H1 (cell line): ENCODE measurements at regions of chr11 and their contacts with region 1.

Region 1: GRCh38 chr11:131748151-131749050 is 378.0 kb downstream of the NTM start:
- DNase-seq: peak in 1 of 2 experiments; percentile 83
- H3K4me3 ChIP-seq: no peak overlapping the region
- H3K27ac ChIP-seq: no peak overlapping the region
- H3K4me1 ChIP-seq: peaks cover 0 to 2% (median 0%) of the 10 kb centered on the region in 4 experiments; a peak in 2 of 7 replicates
- H3K27me3 ChIP-seq: no peaks in the 10 kb centered on the region
- CTCF ChIP-seq: peak; percentile 76 to 89 (median 82)
- EP300 ChIP-seq: no peak
- POLR2A ChIP-seq: no peak
- RAD21 ChIP-seq: peak; percentile 87 to 88

Region 2: GRCh38 chr11:131637469-131638175 is 110.8 kb before region 1 on chr11:
- CTCF ChIA-PET with region 1: no interaction called
- POLR2A ChIA-PET with region 1: no interaction called
- DNase-seq: no peak
- H3K4me3 ChIP-seq: no peak overlapping the region
- H3K27ac ChIP-seq: no peak overlapping the region
- H3K4me1 ChIP-seq: peaks cover 5 to 20% (median 15%) of the 10 kb centered on the region in 4 experiments; a peak in 4 of 7 replicates
- H3K27me3 ChIP-seq: no peaks in the 10 kb centered on the region
- CTCF ChIP-seq: no peak
- EP300 ChIP-seq: no peak
- POLR2A ChIP-seq: no peak
- RAD21 ChIP-seq: no peak

Region 3: GRCh38 chr11:131658952-131659351 is 89.4 kb before region 1 on chr11:
- CTCF ChIA-PET with region 1: no interaction called
- POLR2A ChIA-PET with region 1: no interaction called
- DNase-seq: no peak
- H3K4me3 ChIP-seq: no peak overlapping the region
- H3K27ac ChIP-seq: no peak overlapping the region
- H3K4me1 ChIP-seq: peaks cover 16 to 41% (median 35%) of the 10 kb centered on the region in 4 experiments
- H3K27me3 ChIP-seq: 0 out of 7 replicates have a peak, but pooled peaks cover 0 to 1% (median 0%) of the 10 kb centered on the region in 4 experiments
- CTCF ChIP-seq: no peak
- EP300 ChIP-seq: no peak
- POLR2A ChIP-seq: no peak
- RAD21 ChIP-seq: no peak

Region 4: DNA sequence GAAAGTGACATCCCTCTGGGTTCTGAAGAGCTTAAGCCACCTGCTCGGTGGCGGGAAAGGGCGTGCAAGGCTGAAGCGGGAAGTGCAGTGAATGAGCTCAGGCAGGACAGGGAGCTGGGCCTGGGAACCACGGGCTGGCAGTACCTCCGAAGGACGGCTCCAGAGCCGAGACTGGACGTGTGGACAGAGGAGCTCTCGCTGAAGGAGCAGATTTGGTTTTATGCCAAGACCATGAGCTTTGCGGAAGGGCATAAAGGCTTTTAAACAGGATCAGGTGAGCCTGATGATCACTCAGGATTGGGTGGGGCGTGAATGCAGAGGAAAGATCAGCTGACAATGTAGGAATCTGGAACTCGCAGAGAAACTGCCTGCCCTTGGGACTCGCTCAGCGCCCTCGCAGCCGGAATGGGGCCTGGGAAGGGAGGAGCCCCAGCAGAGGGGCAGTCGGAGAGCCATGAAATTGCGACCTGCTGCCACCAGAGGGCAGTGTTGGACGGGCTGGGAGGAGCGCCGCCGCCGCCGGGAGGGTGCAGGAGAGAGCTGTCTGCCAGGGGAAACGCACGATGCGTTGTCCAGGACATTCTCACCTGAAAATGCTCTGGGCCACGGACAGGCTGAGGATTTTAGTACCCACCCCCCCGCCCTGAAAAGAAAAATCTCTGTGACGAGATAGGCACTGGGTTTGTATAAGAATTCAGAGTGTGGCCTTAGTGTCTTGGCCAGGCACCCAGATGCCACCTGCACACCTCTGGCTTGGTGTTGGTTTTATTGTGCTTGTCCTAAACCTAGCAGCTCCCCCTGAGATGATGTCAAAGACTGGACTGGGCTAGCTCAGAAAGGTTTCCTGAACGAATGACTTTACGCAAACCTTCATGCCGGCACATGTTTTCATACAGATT is 53.6 kb before region 1 on chr11:
- CTCF ChIA-PET with region 1: interaction called, 37 read pairs
- POLR2A ChIA-PET with region 1: no interaction called
- DNase-seq: peak; percentile 63 to 96
- H3K4me3 ChIP-seq: peak overlapping the region in 1 of 4 experiments; percentile 35; a peak in 1 of 8 replicates
- H3K27ac ChIP-seq: no peak overlapping the region
- H3K4me1 ChIP-seq: peaks cover 0 to 5% (median 3%) of the 10 kb centered on the region in 4 experiments; a peak in 5 of 7 replicates
- H3K27me3 ChIP-seq: peaks cover 0 to 38% (median 21%) of the 10 kb centered on the region in 4 experiments; a peak in 6 of 7 replicates
- CTCF ChIP-seq: peak; percentile 94 to 99 (median 99)
- EP300 ChIP-seq: no peak
- POLR2A ChIP-seq: no peak
- RAD21 ChIP-seq: peak; percentile 89 to 90

Region 5: GRCh38 chr11:131737357-131737756 is 11.0 kb before region 1 on chr11:
- CTCF ChIA-PET with region 1: interaction called, 58 read pairs
- POLR2A ChIA-PET with region 1: no interaction called
- DNase-seq: no peak
- H3K4me3 ChIP-seq: no peak overlapping the region
- H3K27ac ChIP-seq: no peak overlapping the region
- H3K4me1 ChIP-seq: peaks cover 0 to 6% (median 0%) of the 10 kb centered on the region in 4 experiments; a peak in 1 of 7 replicates
- H3K27me3 ChIP-seq: no peaks in the 10 kb centered on the region
- CTCF ChIP-seq: peak in 1 of 3 experiments; percentile 6; a peak in 1 of 4 replicates
- EP300 ChIP-seq: no peak
- POLR2A ChIP-seq: no peak
- RAD21 ChIP-seq: peak; percentile 21 to 32; a peak in 3 of 4 replicates

Region 6: DNA sequence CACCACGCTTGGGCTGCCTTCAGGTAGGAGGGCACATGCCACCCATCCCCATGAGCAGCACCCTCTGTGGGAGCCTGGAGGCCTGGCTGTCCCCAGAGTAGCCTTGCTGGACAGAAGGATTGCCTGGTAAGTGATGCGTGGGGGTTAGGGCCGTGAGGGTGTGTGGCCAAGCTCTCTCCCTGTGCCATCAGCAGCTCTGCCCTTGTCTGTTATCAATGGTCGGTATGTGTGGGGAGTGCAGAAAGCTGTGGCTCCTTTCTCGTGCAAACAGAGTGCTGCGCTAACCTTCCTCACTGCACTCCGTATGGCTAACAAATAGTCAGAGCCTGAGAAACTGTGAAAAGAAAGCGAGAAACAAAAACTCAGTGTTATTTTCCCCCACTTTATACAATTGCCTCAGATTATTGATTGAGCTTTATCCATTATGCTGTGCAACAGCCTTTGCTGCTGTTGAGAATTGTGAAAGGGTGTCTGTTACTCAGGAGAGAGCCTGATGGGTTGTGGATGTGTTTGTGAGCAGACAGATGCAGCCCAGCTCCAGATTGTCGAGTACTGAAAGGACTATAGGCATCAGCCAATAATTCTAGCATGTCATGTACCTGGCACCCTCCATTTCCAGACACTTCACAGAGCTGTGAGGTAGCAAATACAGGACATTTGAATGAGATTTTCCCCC is 54.2 kb after region 1 on chr11:
- CTCF ChIA-PET with region 1: interaction called, 15 read pairs
- POLR2A ChIA-PET with region 1: no interaction called
- DNase-seq: no peak
- H3K4me3 ChIP-seq: peak overlapping the region in 1 of 4 experiments; percentile 15; a peak in 2 of 8 replicates
- H3K27ac ChIP-seq: no peak overlapping the region
- H3K4me1 ChIP-seq: peaks cover 10 to 17% (median 11%) of the 10 kb centered on the region in 4 experiments
- H3K27me3 ChIP-seq: no peaks in the 10 kb centered on the region
- CTCF ChIP-seq: no peak
- EP300 ChIP-seq: no peak
- POLR2A ChIP-seq: no peak
- RAD21 ChIP-seq: no peak

Region 7: GRCh38 chr11:131867457-131868257 is 119.3 kb after region 1 on chr11:
- CTCF ChIA-PET with region 1: interaction called, 86 read pairs
- POLR2A ChIA-PET with region 1: no interaction called
- DNase-seq: peak; percentile 68 to 86
- H3K4me3 ChIP-seq: no peak overlapping the region
- H3K27ac ChIP-seq: no peak overlapping the region
- H3K4me1 ChIP-seq: peaks cover 18 to 33% (median 20%) of the 10 kb centered on the region in 4 experiments
- H3K27me3 ChIP-seq: no peaks in the 10 kb centered on the region
- CTCF ChIP-seq: peak; percentile 91 to 98 (median 96)
- EP300 ChIP-seq: no peak
- POLR2A ChIP-seq: no peak
- RAD21 ChIP-seq: peak; percentile 96

Region 8: DNA sequence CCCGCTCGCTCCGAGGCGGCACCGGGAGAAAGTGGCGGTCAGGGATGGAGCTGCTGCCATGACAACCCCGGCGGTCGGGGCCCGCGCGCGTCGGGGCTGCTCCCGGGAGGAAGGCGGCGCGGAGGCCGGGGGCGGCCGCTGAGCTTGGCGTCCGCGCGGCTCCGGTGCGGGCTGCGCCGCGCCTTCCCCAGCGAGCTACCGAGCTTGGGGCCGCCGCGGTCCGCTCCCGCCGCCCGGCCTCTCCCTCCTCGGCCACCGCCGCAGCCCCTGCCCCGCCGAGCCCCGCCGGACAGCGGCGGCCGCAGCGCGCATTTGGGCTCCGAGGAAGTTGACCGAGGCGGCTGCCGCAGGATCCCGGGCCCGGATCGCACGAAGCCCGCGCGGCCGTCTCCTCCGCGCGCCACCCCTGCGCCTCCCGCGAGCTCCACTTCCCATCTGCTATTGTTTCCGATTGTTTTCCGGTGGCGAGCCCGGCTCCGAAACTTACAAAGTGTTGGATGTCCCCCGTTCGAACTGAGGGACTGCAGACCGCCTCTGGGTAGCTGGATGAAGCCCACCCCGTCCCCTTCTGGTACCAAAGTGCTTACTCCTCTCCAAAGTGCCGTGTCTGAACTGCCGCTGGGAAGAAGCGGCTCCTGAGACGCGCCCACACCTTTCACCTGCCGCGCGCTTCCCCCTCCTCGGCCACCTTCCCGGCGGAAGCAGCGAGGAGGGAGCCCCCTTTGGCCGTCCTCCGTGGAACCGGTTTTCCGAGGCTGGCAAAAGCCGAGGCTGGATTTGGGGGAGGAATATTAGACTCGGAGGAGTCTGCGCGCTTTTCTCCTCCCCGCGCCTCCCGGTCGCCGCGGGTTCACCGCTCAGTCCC is 162.4 kb after region 1 on chr11:
- CTCF ChIA-PET with region 1: interaction called, 56 read pairs
- POLR2A ChIA-PET with region 1: no interaction called
- DNase-seq: peak in 1 of 2 experiments; percentile 74
- H3K4me3 ChIP-seq: peak overlapping the region; percentile 69 to 85 (median 76)
- H3K27ac ChIP-seq: no peak overlapping the region
- H3K4me1 ChIP-seq: peaks cover 4 to 15% (median 7%) of the 10 kb centered on the region in 4 experiments; a peak in 6 of 7 replicates
- H3K27me3 ChIP-seq: no peaks in the 10 kb centered on the region; a peak in 1 of 7 replicates
- CTCF ChIP-seq: no peak
- EP300 ChIP-seq: no peak
- POLR2A ChIP-seq: no peak
- RAD21 ChIP-seq: 0 out of 4 replicates have a peak, but pooled peaks of 1 of the 2 experiments have one; percentile 3

Region 9: GRCh38 chr11:131955904-131956303 is 207.5 kb after region 1 on chr11:
- CTCF ChIA-PET with region 1: no interaction called
- POLR2A ChIA-PET with region 1: no interaction called
- DNase-seq: no peak
- H3K4me3 ChIP-seq: no peak overlapping the region
- H3K27ac ChIP-seq: no peak overlapping the region
- H3K4me1 ChIP-seq: peaks cover 1 to 12% (median 10%) of the 10 kb centered on the region in 4 experiments; a peak in 5 of 7 replicates
- H3K27me3 ChIP-seq: no peaks in the 10 kb centered on the region
- CTCF ChIP-seq: no peak
- EP300 ChIP-seq: no peak
- POLR2A ChIP-seq: no peak
- RAD21 ChIP-seq: no peak

Region 10: DNA sequence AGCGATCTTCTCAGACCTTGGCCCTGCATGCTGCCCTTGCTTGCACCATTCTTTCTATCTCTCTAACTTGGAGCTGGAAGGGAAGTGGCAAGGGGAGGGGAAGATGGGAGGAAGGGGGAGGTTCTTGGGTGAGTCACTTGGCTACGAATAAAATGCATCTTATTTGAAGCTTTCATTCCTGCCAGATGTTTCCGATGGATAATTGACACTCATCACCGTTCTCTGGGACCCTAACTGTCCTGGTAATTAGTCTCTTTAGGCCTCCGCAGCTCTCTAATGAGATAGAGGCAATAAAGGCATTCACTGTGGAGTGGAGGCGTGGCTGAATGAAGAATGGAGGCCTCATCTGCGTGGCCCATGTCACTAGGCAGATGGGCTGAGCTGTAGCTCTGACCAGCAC is 582.1 kb after region 1 on chr11:
- CTCF ChIA-PET with region 1: no interaction called
- POLR2A ChIA-PET with region 1: no interaction called
- DNase-seq: no peak
- H3K4me3 ChIP-seq: no peak overlapping the region
- H3K27ac ChIP-seq: no peak overlapping the region
- H3K4me1 ChIP-seq: peaks cover 0 to 7% (median 3%) of the 10 kb centered on the region in 4 experiments; a peak in 3 of 7 replicates
- H3K27me3 ChIP-seq: peaks cover 0 to 6% (median under 1%) of the 10 kb centered on the region in 4 experiments; a peak in 4 of 7 replicates
- CTCF ChIP-seq: no peak
- EP300 ChIP-seq: no peak
- POLR2A ChIP-seq: no peak
- RAD21 ChIP-seq: no peak